ENCODE measurements at regions of chr3 and their contacts with region 1.

Region 1: DNA sequence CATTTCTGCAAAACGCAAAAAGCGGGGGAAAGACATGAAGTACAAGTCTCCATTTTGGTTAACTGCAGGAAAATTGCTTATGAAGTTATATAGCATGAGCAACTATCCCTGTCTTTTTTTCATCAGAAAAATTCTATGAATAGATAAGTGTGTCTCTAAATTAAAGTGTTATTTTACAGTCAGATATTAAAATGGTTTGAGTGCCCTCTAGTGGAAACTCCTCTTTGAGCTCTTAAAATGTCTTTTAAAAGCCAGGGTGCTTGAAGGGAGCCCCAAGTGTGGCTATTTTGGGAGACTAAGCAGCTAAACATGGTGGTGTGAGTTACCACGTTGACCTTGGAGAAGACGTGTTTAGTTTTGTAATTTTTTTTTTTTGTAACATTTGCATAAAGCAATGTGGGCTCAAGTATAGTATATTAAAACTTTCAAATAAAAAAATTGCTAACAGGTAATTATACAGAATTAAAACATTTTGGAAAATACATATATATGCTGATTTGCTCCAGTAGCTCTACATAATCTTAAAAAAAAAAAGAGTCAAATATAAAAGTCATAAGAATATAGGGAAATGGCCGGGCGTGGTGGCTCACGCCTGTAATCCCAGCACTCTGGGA is 77.2 kb downstream of the PPP2R3A start:
- DNase-seq: peak; percentile 37
- ATAC-seq: peak; percentile 67; the same call in 1 of the 2 replicates
- H3K4me3 ChIP-seq: no peak overlapping the region
- H3K27ac ChIP-seq: no peak overlapping the region
- H3K4me1 ChIP-seq: no peaks in the 10 kb centered on the region
- H3K27me3 ChIP-seq: no peaks in the 10 kb centered on the region
- CTCF ChIP-seq: peak; percentile 50 to 65 (median 64); a peak in 5 of 6 replicates
- POLR2A ChIP-seq: no peak
- RAD21 ChIP-seq: peak; percentile 76

Region 2: GRCh38 chr3:135736740-135737139 is 306.0 kb before region 1 on chr3:
- CTCF ChIA-PET with region 1: interaction called, 27 read pairs
- POLR2A ChIA-PET with region 1: no interaction called
- RAD21 ChIA-PET with region 1: interaction called in 1 of 2 experiments, 3 read pairs
- intact Hi-C with region 1: loop called (anchors 2 kb)
- DNase-seq: peak; percentile 28
- ATAC-seq: peak; percentile 88
- H3K4me3 ChIP-seq: no peak overlapping the region
- H3K27ac ChIP-seq: no peak overlapping the region
- H3K4me1 ChIP-seq: no peaks in the 10 kb centered on the region
- H3K27me3 ChIP-seq: peaks cover 6% of the 10 kb centered on the region; the same call in 1 of the 2 replicates
- CTCF ChIP-seq: peak; percentile 34 to 60 (median 53); a peak in 5 of 6 replicates
- POLR2A ChIP-seq: no peak
- RAD21 ChIP-seq: peak; percentile 70

Region 3: DNA sequence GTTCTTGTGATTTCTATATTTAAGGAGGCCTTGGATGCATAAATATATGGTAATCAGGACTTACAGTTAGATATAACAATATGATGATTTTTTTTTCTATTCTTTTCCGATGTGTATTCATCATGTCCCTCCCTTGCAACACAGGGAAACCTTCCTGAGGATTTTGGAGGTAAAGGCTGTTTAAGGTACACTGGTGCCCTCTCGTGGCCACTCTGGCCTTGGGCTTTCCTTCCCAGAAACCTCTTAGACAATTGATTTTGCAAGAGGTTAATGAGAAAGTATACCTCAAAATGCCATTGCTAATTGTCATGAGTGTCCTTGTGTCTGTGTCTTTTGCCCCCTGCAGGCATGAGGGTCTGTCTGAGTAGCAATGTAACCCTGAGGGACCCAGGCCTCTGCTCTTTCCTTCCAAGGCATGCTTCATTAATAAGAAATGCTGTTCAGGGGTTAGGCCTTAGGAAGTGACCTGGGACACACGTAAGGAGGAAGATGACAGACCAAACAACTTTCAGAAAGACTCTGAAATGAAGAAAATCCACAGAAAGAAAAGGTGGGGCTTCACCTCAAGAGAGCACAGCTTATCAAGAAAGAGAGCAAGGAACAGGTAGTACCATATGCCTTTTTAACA is 147.5 kb before region 1 on chr3:
- CTCF ChIA-PET with region 1: interaction called, 11 read pairs
- POLR2A ChIA-PET with region 1: no interaction called
- RAD21 ChIA-PET with region 1: no interaction called
- intact Hi-C with region 1: loop called (anchors 2 kb)
- DNase-seq: peak; percentile 72
- ATAC-seq: peak; percentile 79
- H3K4me3 ChIP-seq: no peak overlapping the region
- H3K27ac ChIP-seq: no peak overlapping the region
- H3K4me1 ChIP-seq: peaks cover 0 to 10% of the 10 kb centered on the region in 2 experiments; a peak in 1 of 4 replicates
- H3K27me3 ChIP-seq: no peaks in the 10 kb centered on the region
- CTCF ChIP-seq: peak; percentile 70 to 94 (median 90)
- POLR2A ChIP-seq: no peak
- RAD21 ChIP-seq: peak; percentile 91

Region 4: GRCh38 chr3:135905058-135905724 is 137.5 kb before region 1 on chr3:
- CTCF ChIA-PET with region 1: interaction called, 13 read pairs
- POLR2A ChIA-PET with region 1: no interaction called
- RAD21 ChIA-PET with region 1: interaction called, 3 to 4 read pairs
- intact Hi-C with region 1: no loop called
- DNase-seq: no peak
- ATAC-seq: no peak
- H3K4me3 ChIP-seq: no peak overlapping the region
- H3K27ac ChIP-seq: no peak overlapping the region
- H3K4me1 ChIP-seq: peaks cover 2 to 12% of the 10 kb centered on the region in 2 experiments; a peak in 2 of 4 replicates
- H3K27me3 ChIP-seq: no peaks in the 10 kb centered on the region
- CTCF ChIP-seq: peak in 1 of 3 experiments; percentile 17; a peak in 1 of 6 replicates
- POLR2A ChIP-seq: no peak
- RAD21 ChIP-seq: peak; percentile 53

Region 5: GRCh38 chr3:135918580-135918962 is 124.1 kb before region 1 on chr3:
- CTCF ChIA-PET with region 1: interaction called, 15 read pairs
- POLR2A ChIA-PET with region 1: no interaction called
- RAD21 ChIA-PET with region 1: no interaction called
- intact Hi-C with region 1: loop called (anchors 1 kb)
- DNase-seq: peak; percentile 24
- ATAC-seq: peak; percentile 82
- H3K4me3 ChIP-seq: no peak overlapping the region
- H3K27ac ChIP-seq: no peak overlapping the region
- H3K4me1 ChIP-seq: peaks cover 0 to 2% of the 10 kb centered on the region in 2 experiments; a peak in 1 of 4 replicates
- H3K27me3 ChIP-seq: no peaks in the 10 kb centered on the region
- CTCF ChIP-seq: peak; percentile 40 to 64 (median 56)
- POLR2A ChIP-seq: no peak
- RAD21 ChIP-seq: peak; percentile 66

Region 6: GRCh38 chr3:136255672-136256406 is 213.1 kb after region 1 on chr3:
- CTCF ChIA-PET with region 1: no interaction called
- POLR2A ChIA-PET with region 1: no interaction called
- RAD21 ChIA-PET with region 1: no interaction called
- intact Hi-C with region 1: no loop called
- DNase-seq: no peak
- ATAC-seq: no peak
- H3K4me3 ChIP-seq: no peak overlapping the region
- H3K27ac ChIP-seq: no peak overlapping the region
- H3K4me1 ChIP-seq: peaks cover 8% of the 10 kb centered on the region in 2 experiments
- H3K27me3 ChIP-seq: no peaks in the 10 kb centered on the region
- CTCF ChIP-seq: no peak
- POLR2A ChIP-seq: no peak
- RAD21 ChIP-seq: no peak

Measured in HCT116 (cell line).